G401 (cell line): ENCODE measurements at regions of chr11 and their contacts with region 1.

Region 1: GRCh38 chr11:116312570-116313391 is 460.0 kb downstream of the BUD13 start:
- DNase-seq: peak; percentile 32

Region 2: DNA sequence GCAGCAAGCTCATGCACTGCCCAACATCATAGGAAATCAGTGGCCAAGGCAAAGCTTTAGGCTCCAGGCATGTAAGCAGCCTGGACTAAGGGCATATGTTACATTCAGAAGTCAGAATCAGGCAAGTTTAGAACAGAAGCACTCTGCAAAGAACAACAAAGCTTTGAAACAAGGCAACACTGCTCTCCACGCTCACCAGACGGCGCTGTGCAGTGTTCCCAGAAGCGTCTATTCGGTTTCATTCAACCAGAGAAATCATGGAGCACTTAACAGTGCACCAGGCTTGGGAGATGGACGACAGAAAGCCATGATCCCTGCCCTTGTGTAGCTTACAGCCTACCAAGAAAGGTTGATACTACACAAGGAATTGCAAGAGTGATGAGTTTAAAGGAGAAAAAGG is 95.8 kb before region 1 on chr11:
- in situ Hi-C with region 1: no loop called
- DNase-seq: peak; percentile 57

Region 3: DNA sequence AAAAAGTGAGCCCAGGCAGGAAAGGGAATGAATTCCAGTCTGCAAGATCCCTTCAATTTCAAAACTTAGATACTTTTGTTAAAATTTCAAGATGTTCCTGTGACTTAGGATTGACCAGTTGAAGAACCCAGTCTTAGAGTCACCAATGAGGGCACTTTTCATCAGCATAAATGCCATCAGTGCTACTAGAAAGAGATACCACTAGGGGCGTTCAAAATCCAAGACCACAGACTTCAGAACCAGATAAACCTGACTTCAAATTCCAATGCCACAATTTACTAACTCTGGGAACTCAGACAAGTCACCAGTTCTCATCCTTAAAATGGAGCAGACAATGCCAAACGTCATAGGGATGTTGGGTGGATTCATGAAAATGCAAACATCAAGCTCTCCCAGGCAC is 63.2 kb before region 1 on chr11:
- in situ Hi-C with region 1: loop called (anchors 5 kb)
- DNase-seq: no peak

Region 4: GRCh38 chr11:116276051-116277044 is 36.4 kb before region 1 on chr11:
- in situ Hi-C with region 1: no loop called
- DNase-seq: peak; percentile 66

Region 5: GRCh38 chr11:116445108-116446047 is 132.6 kb after region 1 on chr11:
- in situ Hi-C with region 1: no loop called
- DNase-seq: no peak